IMR-90 (cell line): ENCODE measurements at regions of chr2 and their contacts with region 1.

Region 1: DNA sequence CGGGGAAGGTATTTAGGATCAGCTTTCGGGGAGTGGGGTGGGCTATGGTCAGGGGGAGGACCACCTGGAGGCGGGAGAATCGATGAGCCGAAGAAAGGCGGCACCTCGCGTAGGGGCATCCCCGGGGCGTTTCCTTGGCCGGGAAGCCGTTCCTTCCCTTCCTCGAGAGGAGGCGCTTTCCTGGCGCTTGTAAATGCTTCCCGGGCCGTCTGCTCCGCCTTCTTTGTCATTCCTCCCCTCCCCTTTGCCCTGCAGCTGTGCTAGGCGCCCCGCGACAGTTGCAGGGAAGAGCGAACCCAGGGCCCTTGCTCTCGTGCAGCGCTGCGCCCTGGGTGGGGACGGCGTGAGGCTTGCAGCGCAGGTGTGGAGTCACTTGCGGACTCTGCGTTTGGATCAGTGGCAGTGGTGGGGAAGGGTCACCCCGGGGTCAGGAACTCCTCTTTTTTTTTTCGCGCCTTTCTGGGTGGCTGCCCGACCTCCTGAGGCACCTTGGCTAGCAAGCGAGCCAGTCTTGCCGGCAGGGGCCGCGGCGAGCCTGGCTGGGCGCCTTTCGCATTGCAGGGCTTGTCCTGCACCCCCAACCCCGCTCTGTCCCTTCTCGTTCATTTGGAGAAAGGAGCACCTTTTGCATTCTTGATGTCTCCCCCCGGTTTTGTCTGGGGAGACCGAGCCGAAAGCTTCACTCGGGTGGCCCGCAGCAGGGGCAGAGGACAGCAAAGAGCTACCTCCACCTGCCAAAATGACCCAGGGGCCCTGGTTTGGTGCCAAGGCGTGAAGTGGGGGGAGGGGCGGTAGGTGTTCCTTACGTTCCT is 840 bp downstream of the KCNS3 start:
- DNase-seq: peak; percentile 33
- ATAC-seq: peak; percentile 44
- H3K4me3 ChIP-seq: peak overlapping the region; percentile 83
- H3K27ac ChIP-seq: no peak overlapping the region
- H3K4me1 ChIP-seq: no peaks in the 10 kb centered on the region
- H3K27me3 ChIP-seq: peaks cover 32% of the 10 kb centered on the region
- CTCF ChIP-seq: peak; percentile 35
- POLR2A ChIP-seq: no peak
- RAD21 ChIP-seq: peak; percentile 28; the same call in 1 of the 2 replicates

Region 2: DNA sequence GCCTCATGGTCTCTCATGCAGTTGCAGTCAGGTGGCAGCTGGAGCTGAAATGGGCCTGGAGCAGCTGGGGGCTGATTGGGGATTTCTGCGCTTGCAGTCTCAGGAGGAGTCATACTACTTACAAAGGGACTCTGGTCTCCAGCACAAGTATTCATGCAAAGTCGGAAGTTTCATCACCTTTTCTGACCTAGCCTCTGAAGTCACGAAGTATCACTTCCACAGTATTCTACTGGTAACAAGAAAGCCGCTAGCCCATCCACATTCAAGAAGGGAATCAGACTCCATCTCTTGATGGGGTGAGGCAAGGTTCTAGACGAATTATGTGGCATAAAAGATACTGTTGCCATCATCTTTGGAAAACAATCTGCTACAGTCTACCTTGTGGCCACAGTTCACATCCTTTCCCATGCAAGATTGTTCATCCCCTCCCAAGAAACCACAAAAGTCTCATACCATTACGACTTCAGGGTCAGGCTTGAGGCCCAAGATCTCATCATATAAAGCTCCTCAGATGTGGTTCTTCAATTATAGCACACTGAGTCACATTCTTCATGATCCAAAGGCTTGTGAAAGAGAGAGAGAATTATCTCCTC is 221.0 kb before region 1 on chr2:
- CTCF ChIA-PET with region 1: no interaction called
- POLR2A ChIA-PET with region 1: no interaction called
- dilution Hi-C with region 1: no loop called
- in situ Hi-C with region 1: no loop called
- intact Hi-C with region 1: no loop called
- DNase-seq: peak; percentile 76
- ATAC-seq: no peak
- H3K4me3 ChIP-seq: no peak overlapping the region
- H3K27ac ChIP-seq: no peak overlapping the region
- H3K4me1 ChIP-seq: no peaks in the 10 kb centered on the region
- H3K27me3 ChIP-seq: no peaks in the 10 kb centered on the region
- CTCF ChIP-seq: no peak
- POLR2A ChIP-seq: no peak
- RAD21 ChIP-seq: no peak

Region 3: DNA sequence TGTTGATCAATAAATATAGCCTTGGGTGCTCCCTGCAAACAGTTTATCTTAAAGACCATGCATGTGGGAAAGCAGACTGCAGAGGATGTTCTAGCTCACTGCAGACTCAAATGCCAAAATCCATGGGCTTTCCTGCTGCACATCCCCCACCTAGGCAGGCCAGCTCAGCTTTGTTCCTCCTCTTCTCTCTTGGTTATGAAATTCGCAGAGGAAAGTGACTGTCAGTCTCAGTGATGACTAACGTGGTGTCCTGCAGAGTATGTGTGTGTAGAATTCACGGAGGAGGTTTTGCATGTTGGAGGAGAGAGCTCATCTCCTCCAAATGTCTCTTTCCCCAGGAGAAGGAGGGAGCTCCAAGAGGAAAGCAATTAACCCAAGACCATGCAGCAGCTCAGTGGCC is 22.3 kb before region 1 on chr2:
- CTCF ChIA-PET with region 1: no interaction called
- POLR2A ChIA-PET with region 1: no interaction called
- dilution Hi-C with region 1: no loop called
- in situ Hi-C with region 1: no loop called
- intact Hi-C with region 1: no loop called
- DNase-seq: peak; percentile 18
- ATAC-seq: peak; percentile 37; the same call in 1 of the 2 replicates
- H3K4me3 ChIP-seq: no peak overlapping the region
- H3K27ac ChIP-seq: no peak overlapping the region
- H3K4me1 ChIP-seq: no peaks in the 10 kb centered on the region
- H3K27me3 ChIP-seq: peaks cover 8% of the 10 kb centered on the region
- CTCF ChIP-seq: no peak
- POLR2A ChIP-seq: no peak
- RAD21 ChIP-seq: no peak

Region 4: GRCh38 chr2:17912266-17912691 is 33.0 kb after region 1 on chr2:
- CTCF ChIA-PET with region 1: no interaction called
- POLR2A ChIA-PET with region 1: no interaction called
- dilution Hi-C with region 1: no loop called
- in situ Hi-C with region 1: no loop called
- intact Hi-C with region 1: no loop called
- DNase-seq: no peak
- ATAC-seq: no peak
- H3K4me3 ChIP-seq: no peak overlapping the region
- H3K27ac ChIP-seq: no peak overlapping the region
- H3K4me1 ChIP-seq: no peaks in the 10 kb centered on the region
- H3K27me3 ChIP-seq: no peaks in the 10 kb centered on the region; the same call in 1 of the 2 replicates
- CTCF ChIP-seq: no peak
- POLR2A ChIP-seq: no peak
- RAD21 ChIP-seq: no peak

Region 5: DNA sequence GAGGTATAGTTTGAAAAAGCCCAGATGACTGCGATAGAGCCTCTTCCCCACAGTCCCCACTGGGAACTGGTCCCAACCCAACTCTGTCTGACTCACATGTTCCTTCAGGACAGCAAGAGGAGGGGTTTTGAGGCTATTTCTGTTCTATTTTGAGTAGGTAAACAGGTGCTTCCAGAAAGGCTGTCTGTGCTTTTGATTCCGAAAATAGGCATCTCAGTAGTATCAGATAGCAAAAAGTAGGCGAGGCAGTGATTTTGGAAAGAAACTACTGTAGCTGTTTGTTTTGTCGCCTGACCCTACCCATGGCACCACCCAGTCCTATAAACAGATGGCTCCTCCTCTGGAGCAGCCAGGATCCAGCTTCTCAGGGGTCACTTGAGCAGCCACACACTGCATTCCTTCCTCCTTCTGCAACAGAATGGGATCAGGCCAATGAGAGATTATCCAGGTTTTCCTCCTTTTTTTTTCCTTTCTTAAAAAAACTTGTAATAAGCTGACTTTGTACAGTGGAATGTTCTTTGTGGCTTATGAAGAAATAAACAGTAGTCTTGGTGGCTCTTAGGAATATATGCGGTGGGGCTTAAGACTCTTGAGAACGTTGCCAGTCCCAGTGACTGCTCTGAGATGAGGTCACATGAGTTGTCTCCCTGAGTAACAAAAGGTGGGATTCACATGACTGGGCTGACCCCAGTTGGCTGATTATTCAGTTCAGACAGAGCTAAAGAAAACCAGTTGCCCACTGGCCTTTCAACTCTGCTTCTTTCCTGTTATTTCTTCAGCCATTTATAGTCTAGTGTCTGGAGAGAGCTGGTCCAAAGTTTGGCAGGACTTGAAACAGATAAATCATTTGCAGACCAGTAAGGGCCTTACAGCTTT is 97.8 kb after region 1 on chr2:
- CTCF ChIA-PET with region 1: no interaction called
- POLR2A ChIA-PET with region 1: no interaction called
- dilution Hi-C with region 1: no loop called
- in situ Hi-C with region 1: no loop called
- intact Hi-C with region 1: loop called (anchors 5 kb)
- DNase-seq: peak; percentile 100
- ATAC-seq: peak; percentile 92
- H3K4me3 ChIP-seq: peak overlapping the region; percentile 1; the same call in 1 of the 2 replicates
- H3K27ac ChIP-seq: peak overlapping the region; percentile 50
- H3K4me1 ChIP-seq: peaks cover 19% of the 10 kb centered on the region
- H3K27me3 ChIP-seq: no peaks in the 10 kb centered on the region
- CTCF ChIP-seq: no peak
- POLR2A ChIP-seq: no peak
- RAD21 ChIP-seq: no peak; the same call in 1 of the 2 replicates